ENCODE measurements at regions of chr7 and their contacts with region 1.

Region 1: GRCh38 chr7:138898255-138898654 is 82.9 kb downstream of the KIAA1549 start:
- DNase-seq: peak; percentile 54
- H3K4me3 Mint-ChIP-seq: no peak overlapping the region
- H3K27ac Mint-ChIP-seq: peak overlapping the region; percentile 75
- H3K4me1 Mint-ChIP-seq: peaks cover 43% of the 10 kb centered on the region
- H3K27me3 Mint-ChIP-seq: no peaks in the 10 kb centered on the region

Region 2: DNA sequence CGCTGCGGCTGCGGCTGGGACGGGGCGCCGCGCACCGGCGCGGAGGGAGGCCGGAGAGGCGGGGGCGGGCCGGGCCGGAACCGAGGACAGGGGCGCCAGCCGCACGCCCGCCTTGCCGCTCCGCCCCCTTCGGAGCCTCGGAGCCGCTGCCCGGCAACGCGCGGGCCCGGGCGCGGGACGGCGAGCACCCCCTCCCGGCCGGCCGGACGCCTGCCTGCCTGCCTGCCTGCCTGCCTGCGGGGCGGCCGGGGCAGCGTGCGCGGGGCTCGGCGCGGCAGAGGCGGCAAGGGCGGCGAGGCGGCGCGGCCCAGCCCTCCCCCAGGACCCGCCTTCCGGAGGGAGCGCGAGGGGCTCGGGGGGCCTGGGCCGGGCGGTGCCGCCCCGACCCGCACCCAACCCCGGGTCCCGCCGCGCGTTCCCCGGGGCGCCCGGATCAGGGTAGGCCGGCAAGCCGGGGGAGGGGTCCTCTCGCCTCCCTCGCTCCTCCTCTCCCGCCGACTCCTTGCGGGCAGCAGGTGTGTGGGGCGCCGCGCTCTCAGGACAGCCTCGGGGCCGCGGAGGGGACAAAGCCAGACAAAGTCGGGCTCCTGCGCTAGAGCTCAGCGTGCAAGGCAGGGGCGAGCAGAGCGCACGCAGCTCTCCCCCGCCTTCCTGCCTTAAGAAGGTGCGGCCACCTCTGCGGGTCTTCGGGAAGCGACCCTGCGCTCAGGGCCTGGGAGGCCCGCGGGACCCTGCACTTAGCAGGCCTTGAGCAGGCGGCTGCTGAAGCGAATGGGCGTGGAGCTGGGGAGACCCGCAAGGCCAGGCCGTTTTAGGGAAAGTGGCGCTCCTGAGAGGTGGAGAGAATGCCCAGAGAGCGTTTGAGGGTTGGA is 83.3 kb after region 1 on chr7 and contains the start of gene KIAA1549:
- CTCF ChIA-PET with region 1: interaction called, 3 read pairs
- intact Hi-C with region 1: loop called (anchors 5 kb)
- DNase-seq: peak; percentile 59
- H3K4me3 Mint-ChIP-seq: peak within 1 kb of the TSS; percentile 80
- H3K27ac Mint-ChIP-seq: no peak within 1 kb of the TSS
- H3K4me1 Mint-ChIP-seq: peaks cover 8% of the 10 kb centered on the region
- H3K27me3 Mint-ChIP-seq: peaks cover 36% of the 10 kb centered on the region
- total RNA-seq, gene KIAA1549: 0.60 to 0.67 TPM

Region 3: DNA sequence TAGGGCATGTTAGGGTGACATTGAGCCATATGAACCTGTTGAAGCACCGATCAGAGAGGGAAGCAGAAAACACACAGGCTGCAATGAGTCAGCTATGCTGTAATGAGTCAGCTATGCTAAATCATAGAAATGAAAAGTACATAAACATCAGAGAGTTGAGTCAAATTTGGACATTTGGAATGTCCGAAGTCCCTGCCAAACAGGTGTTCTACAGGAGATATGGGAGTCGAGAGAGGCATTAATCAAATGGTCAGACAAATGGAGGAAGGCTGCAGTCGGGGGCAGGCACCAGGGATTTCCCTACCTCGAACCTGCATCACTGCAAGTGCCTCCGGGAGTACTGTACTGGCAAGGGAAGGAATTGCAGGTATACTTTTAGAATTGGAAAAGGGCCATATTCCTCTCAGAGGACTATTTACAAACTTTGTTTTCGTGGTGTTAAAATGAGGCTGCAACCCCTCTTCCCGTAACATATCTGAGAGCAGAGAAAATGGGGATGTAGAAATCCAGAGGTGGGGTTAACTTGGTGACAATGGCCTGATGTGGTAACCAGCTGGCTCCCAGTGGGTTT is 220.1 kb after region 1 on chr7:
- CTCF ChIA-PET with region 1: no interaction called
- intact Hi-C with region 1: loop called (anchors 5 kb)
- DNase-seq: peak; percentile 76
- H3K4me3 Mint-ChIP-seq: peak overlapping the region; percentile 46
- H3K27ac Mint-ChIP-seq: peak overlapping the region; percentile 17
- H3K4me1 Mint-ChIP-seq: peaks cover 52% of the 10 kb centered on the region
- H3K27me3 Mint-ChIP-seq: no peaks in the 10 kb centered on the region

Region 4: DNA sequence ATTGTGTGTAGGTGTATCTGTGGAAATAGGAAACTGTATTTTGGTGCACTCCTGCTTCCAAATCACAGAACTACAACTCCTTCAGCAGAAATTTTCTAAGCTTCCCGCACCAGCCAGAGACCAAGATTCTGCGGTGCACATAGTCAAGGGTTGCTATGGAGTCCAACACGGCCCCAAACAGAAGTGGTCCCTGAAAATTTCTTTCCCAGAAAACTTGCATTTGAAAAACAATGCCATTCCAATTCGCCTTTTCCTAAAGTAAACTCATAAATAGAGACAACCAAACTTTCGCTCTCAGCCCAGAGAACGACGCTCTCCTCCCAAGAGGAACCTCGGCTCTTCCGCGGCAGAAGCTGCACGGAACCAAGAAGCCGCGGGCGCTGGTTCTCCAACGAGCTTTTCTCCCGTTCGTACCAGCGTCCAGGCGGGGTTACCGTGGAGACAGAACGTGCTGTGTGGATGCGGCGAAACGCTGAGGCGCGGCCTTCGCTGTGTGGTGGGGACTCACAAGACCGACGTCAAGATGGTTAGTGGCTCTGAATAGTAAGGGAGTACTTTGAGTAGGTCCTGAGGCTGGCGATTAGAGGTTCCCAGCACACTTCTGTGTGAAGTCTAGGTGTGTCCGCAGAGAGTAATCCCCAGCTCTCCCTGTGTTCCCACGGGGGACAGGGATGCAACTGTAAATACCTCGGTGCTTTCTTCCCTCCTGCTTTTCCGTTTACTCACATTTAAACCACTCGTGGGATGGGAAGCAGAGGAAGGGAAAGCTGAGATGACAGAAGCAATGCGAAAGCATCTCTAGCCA is 235.3 kb after region 1 on chr7:
- CTCF ChIA-PET with region 1: no interaction called
- intact Hi-C with region 1: loop called (anchors 5 kb)
- DNase-seq: peak; percentile 92
- H3K4me3 Mint-ChIP-seq: peak overlapping the region; percentile 84
- H3K27ac Mint-ChIP-seq: peak overlapping the region; percentile 68
- H3K4me1 Mint-ChIP-seq: peaks cover 22% of the 10 kb centered on the region
- H3K27me3 Mint-ChIP-seq: no peaks in the 10 kb centered on the region

Region 5: DNA sequence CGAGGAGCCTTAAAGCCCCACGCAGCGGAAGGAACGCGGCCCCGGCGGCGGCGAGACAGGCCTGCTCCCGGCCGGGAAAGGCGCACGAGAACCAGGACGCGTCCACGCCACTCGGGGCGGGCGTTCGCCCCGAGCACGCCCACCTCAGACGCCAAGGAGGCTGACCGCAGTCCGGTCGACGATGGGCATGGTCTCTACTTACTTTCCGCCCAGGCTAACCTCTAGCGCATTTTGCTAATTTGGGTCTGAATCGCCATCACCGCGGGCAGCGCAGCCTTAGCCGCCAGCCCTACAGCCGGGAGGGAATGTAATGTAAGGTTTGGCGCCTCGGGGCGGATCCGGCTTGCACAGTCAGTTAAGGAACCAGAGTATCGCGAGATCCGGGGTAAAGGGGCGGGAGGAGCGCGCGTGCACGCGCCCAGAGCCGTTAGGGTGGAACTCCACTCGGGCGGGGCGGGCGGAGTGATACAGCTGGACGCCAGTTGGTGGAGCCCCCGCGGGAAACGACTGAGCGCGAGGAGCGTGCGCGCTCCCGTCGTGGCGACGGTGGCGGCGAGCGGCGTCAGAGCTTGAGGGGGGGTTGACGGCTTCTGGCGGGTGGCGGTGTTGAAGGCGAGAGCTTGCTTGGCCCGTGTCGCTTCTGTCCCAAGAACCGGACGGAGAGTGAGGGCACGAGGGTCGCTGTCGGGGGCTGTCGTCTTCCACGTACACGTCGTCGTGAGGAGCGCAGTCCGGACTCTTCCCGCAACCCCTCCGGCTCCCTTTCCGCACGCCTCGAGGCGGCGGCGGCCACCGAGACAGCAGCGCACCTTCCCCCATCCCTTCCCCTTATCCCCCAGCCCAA is 461.3 kb after region 1 on chr7 and contains the start of gene LUC7L2:
- CTCF ChIA-PET with region 1: interaction called, 3 read pairs
- intact Hi-C with region 1: loop called (anchors 5 kb)
- DNase-seq: peak; percentile 100
- H3K4me3 Mint-ChIP-seq: peak within 1 kb of the TSS; percentile 93
- H3K27ac Mint-ChIP-seq: peak within 1 kb of the TSS; percentile 98
- H3K4me1 Mint-ChIP-seq: peaks cover 33% of the 10 kb centered on the region
- H3K27me3 Mint-ChIP-seq: no peaks in the 10 kb centered on the region
- total RNA-seq, gene LUC7L2: 132 to 138 TPM

Measured in activated naive CD4-positive, alpha-beta T cell treated with anti-CD3 and anti-CD28 coated beads for 36 hours (primary cell).